Head of caudate nucleus (tissue), 42 donors: ENCODE measurements at regions of chr5 and their contacts with region 1.

Region 1: GRCh38 chr5:170225326-170226128 is 7.3 kb upstream of the C5orf58 start:
- DNase-seq: peak; percentile 53 to 95 (median 87)

Region 2: DNA sequence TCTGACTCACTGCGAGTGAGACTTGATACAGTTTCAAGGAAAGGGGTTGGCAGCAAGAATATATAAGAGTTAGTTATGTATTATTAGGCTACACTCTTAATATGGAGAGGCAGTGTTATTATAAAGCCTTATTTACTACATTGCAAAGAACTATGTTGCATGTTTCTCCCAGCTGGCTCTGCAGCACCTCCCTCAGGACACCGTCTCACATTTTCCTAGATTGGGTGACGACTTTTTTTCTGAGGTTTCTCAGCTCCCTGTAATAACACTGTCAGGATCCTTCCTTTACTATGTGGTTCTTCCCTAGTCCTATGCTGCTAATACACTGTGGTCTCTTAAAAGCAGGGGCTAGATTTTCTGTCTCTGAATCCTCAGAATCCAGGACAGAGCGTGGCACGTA is 398.9 kb before region 1 on chr5:
- intact Hi-C with region 1: no loop called
- DNase-seq: no peak

Region 3: GRCh38 chr5:170159101-170159698 is 66.3 kb before region 1 on chr5:
- intact Hi-C with region 1: no loop called
- DNase-seq: no peak

Region 4: DNA sequence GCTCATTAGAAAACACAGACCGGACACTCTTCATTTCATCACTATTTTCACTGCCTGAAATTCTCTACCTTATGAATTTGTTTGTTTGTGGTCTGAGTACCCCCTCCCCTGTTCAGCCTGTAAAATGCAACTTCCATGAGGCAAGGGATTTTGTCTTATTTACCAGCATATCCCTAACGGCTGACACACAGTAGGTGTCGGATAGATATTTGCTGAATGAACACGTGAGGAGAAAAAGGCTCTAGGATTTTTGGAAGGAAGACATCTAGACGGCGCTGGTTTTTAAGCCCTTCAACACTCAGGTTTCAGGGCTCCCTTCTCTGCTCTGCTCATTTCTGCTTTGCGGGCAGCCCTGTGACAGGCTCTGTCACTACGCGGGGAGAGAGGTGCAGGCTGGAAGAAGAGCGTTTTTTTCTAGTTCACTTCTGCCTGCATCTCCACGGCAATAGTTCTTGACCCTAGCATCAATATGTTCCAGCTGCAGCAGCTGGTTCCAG is 122.7 kb after region 1 on chr5:
- intact Hi-C with region 1: loop called (anchors 5 kb)
- DNase-seq: no peak

Region 5: GRCh38 chr5:170360709-170361108 is 135.2 kb after region 1 on chr5:
- intact Hi-C with region 1: no loop called
- DNase-seq: peak in 2 of 42 donors; percentile 14 to 34

Region 6: DNA sequence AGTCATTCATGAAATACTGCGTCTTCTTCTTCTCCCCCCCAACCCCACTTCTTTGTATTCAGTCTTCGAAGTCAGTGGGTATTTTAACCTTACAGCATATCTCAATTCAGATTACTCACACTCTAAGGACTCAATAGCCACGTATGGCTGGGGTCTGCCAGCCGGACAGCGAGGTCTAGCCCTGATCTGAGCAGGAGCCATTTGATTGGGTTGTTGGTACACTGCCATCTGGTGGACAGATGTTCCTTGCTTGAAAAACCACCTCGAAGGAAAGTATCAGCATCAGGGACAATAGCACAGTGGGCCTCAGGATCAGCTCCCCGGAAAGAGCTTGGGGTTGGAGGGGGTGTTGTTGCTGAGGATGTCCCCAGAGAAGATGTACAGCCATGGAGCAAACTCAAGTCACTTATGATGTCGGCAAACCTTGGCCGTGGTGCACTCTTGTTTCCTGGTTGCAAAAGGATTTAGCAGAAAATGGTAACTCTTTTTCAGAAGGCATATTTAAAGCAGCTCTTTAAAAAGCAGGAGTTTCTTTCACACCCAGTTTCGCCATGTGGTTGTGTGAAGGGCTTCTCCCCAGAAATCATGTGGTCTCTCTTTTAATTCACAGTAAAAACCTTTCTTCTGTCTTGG is 195.4 kb after region 1 on chr5:
- intact Hi-C with region 1: loop called (anchors 5 kb)
- DNase-seq: peak in 40 of 42 donors; percentile 24 to 87 (median 66)

Region 7: GRCh38 chr5:170638454-170639220 is 413.1 kb after region 1 on chr5:
- intact Hi-C with region 1: loop called (anchors 10 kb)
- DNase-seq: peak in 41 of 42 donors; percentile 35 to 90 (median 72)